Cardiac septum (tissue), 1 donor: ENCODE measurements at regions of chr21 and their contacts with region 1.

Region 1: DNA sequence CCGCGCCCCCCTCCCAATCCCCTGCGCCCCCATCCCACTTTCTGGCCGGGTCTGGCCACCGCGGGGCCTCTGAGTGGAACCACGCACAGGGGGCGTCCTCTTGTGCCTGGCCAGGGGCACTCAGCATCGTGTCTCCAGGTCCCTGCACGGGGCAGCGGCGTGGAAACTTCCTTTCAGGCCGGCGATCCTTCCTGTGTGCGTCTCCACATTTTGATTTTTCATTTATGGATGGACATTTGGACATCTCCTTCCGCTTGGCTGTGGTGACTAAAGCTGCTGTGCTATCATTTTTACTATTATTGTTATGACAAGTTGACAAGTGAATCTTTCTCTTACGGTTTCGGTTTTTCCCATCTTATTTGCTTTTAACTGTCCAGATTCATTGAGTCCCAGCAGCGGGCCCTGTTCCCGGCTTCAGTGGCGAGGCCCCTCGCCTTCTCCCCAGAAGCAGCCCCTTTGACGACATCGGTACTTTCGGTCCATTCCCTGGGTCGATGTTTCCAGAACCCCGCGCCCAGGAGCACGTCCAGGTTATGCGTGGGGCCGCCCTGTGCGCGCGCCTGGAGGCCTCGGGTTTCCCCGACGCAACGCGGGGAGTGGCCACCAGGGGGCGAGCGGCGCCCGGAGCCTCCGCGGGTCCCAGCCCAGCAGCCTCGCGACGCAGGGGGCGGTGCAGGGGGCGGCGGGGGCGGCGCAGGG is 12.4 kb upstream of the SLC19A1 start:
- DNase-seq: peak; percentile 96

Region 2: DNA sequence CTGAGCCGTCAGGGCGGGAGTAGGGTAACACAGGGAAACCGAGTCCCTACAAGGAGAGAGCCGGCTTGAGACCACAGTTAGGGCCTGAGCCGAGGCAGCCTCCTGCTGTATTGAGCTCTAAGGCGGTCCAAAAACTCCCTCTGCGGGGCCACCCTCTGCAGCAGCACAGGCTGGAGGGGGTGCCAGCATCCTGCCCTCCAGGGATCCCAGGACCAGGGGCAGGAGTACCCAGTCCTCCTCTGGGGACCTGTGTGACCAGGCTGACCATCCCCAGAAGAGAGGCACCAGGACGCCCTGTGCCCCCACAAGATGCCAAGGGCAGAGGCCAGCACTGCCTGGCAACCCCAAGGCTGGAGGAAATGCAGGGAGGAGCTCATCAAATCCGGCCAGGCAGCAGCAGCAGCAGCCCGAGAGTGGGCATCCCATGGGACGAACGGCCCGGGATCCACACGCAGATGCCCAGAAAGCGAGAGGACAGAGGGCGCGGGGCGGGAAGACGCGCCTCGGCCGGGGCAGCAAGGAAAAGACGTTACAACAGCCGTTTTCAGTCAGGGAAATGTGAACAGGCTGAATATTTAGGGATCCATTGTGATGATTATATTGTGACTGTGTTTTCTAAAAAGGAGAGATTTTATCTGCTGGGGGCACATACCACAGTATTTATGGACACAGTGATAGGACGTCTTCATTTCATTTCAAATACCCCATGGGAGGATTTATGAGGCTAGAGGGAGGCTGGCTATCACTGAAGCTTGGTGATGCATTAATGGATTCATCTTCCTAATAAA is 206.7 kb before region 1 on chr21:
- intact Hi-C with region 1: no loop called
- DNase-seq: no peak

Region 3: DNA sequence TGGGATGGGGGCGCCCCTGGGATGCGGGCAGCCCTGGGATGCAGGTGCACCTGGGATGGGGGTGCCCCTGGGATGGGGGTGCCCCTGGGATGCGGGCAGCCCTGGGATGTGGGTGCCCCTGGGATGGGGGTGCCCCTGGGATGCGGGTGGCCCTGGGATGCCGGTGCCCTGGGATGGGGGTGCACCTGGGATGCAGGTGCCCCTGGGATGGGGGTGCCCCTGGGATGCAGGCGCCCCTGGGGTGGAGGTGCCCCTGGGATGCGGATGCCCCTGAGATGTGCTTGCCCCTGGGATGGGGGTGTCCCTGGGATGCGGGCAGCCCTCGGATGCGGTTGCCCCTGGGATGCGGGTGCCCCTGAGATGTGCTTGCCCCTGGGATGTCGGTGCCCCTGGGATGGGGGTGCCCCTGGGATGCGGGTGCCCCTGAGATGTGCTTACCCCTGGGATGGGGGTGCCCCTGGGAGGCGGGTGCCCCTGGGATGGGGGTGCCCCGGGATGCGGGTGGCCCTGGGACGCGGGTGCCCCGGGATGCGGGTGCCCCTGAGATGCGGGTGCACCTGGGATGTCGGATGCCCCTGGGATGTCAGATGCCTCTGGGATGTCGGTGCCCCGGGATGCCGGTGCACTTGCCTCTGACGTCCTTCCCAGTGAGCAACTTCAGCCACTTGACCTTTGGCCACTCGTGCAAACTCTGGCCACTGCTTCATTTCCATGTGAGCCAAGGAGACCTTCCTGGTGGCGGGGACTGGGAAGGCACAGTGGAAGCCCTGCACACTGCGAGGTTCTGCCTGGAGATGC is 25.0 kb after region 1 on chr21:
- intact Hi-C with region 1: no loop called
- DNase-seq: peak; percentile 66

Region 4: DNA sequence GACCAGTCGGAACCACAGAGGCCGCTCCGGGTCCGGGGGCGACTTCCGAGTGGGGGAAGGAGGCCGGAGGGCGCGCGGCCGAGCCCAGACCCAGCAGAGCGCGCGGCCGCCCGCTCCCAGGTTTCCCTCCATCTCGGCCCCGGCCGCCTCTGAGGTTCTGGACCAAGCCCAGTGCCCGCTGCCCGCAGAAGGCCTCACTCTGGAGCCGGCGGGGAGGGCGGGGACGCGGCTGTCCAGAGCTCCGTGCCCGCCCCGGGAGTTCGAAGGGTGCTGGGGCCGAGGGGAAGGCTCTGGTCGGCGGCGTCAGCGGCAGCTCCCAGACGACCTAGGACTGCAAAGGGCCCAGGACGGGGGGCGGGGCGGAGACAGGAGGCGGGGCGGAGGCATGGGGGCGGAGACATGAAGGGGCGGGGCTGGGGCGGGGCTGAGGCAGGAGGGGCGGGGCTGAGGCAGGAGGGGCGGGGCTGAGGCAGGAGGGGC is 35.7 kb after region 1 on chr21:
- intact Hi-C with region 1: loop called (anchors 5 kb)
- DNase-seq: peak; percentile 90

Region 5: DNA sequence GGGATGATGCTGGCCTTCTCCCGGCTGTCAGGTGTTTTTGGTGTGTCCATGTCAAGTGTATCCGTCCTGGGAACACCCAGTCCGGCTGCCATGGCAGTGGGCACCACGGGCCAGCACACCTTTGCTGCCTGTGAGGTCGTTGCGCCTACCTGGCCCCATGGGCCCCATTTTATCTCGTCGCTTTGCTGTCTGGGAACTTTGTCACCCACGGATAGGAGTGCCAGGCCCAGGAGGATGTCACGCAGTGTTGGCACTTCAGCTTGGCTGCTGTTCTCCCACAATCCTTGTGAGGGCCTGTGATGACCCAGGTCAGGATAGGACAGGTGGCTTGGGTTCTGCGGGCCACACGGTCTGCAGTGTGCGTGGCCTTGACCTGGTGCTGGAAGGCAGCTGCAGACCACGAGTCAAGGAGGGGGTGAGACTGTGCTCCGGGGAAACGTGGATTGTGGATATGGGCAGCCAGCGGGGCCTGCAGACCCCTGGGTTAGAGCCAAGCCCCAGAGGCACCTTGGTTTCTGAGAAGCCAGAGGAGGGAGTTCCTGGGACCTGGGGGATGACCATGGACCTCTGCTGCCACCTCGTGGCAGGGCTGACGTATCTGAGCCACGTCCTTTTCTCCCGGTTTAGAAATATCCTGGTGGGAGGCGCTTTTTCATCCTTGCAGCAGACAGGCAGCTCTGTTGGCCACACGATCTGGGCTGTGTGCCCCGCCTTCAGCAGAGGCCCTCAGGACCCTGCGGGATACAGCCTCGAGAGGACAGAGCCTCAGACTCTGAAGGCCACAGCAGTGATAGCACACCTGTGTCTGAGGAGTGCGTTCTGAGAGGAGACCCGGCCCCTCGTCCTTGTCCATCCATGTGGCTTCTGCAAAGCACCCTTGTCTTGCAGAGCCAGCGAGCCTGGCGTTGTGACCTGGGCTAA is 265.8 kb after region 1 on chr21:
- intact Hi-C with region 1: loop called (anchors 1 kb)
- DNase-seq: peak; percentile 86

Region 6: GRCh38 chr21:45923146-45923545 is 368.5 kb after region 1 on chr21:
- intact Hi-C with region 1: loop called (anchors 5 kb)
- DNase-seq: no peak

Region 7: DNA sequence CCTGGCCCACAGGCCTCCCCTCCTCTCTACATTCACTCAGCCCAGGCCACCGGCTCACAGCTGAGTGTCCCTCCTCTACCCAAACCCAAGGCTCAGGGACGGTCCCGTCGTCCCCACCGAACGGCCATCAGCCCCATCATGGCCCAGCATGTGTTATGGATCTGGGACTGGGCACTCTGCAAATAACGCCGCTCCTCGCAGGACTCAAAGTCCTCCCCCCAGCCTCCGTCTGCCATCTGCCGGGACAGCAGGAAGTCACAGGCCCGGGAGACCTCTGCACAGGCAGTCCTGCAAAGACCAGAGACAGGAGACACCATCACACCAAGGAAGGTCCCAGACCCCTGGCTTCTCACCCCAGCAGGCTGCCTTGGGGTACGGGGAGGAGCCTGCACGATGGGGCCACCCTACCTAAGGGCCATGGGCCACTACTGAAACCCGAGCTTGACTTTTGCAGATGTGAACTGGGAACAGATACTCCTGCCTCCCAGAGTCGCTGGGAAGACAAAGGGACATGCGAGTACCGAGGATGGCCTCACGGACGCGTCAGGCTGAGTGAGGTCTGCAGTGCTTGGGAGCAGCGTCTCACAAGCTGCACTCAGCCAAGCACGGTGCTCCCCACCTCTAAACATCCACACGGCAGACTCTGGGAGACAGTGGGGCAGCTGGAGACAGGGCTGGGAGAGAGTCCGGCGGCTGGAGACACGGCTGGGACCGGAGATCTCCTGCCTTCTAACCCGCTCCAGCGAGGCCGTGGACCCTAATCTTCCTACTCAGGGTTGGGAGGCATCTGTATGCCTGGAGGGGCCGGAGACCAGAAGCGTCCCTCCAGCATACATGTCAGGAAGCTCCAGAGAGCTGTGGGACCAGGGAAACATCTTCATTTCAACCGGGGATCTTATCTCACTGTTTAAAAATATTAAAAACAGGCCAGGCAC is 640.0 kb after region 1 on chr21:
- intact Hi-C with region 1: no loop called
- DNase-seq: peak; percentile 64